SK-N-SH (cell line): ENCODE measurements at regions of chr14 and their contacts with region 1.

Region 1: GRCh38 chr14:55438066-55438683 is 2.2 kb downstream of the TBPL2 start:
- DNase-seq: peak; percentile 62
- H3K4me3 ChIP-seq: no peak overlapping the region
- H3K27ac ChIP-seq: no peak overlapping the region
- H3K4me1 ChIP-seq: no peaks in the 10 kb centered on the region
- H3K27me3 ChIP-seq: peaks cover 15% of the 10 kb centered on the region; the same call in 1 of the 2 replicates
- CTCF ChIP-seq: peak; percentile 73
- EP300 ChIP-seq: no peak
- RAD21 ChIP-seq: peak; percentile 86

Region 2: DNA sequence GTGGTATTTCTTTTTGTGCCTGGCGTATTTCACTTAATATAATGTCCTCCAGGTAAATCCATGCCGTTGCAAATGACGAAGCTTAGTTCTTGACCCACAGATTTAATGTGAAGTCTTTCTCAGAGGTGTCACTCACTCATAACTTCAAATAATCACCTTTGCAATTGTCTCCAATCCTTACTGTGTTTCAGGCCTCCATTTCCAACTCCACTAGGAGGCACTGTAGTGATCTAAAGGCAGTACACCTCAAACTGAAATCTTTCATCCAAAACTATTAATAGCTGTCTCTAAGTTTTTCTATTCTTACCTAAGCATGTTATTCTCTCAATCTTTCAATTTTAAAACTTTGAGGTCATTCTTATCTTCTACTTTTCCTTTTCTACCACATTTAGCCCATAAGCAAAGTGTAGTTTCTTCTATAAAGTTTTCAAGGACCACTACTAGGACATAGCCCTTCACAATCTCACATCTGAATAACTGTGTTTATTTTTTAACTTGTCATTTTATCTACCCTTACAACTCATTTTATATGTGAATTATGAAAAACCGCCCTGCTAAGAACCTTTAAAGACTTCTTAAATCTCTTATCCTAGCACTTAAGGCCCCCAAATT is 192.4 kb before region 1 on chr14:
- CTCF ChIA-PET with region 1: no interaction called
- POLR2A ChIA-PET with region 1: no interaction called
- DNase-seq: no peak
- H3K4me3 ChIP-seq: no peak overlapping the region
- H3K27ac ChIP-seq: no peak overlapping the region
- H3K4me1 ChIP-seq: no peaks in the 10 kb centered on the region; a peak in 1 of 4 replicates
- H3K27me3 ChIP-seq: peaks cover 7% of the 10 kb centered on the region
- CTCF ChIP-seq: peak; percentile 72
- EP300 ChIP-seq: no peak
- RAD21 ChIP-seq: peak; percentile 50

Region 3: GRCh38 chr14:55454264-55455002 is 16.3 kb after region 1 on chr14:
- CTCF ChIA-PET with region 1: interaction called, 11 read pairs
- POLR2A ChIA-PET with region 1: no interaction called
- DNase-seq: peak; percentile 79
- H3K4me3 ChIP-seq: peak overlapping the region; percentile 16 to 21; a peak in 2 of 4 replicates
- H3K27ac ChIP-seq: peak overlapping the region; percentile 58 to 92
- H3K4me1 ChIP-seq: peaks cover 17 to 23% of the 10 kb centered on the region in 2 experiments; a peak in 3 of 4 replicates
- H3K27me3 ChIP-seq: no peaks in the 10 kb centered on the region
- CTCF ChIP-seq: no peak
- EP300 ChIP-seq: peak; percentile 25 to 83; a peak in 3 of 4 replicates
- RAD21 ChIP-seq: no peak

Region 4: GRCh38 chr14:55562135-55562534 is 124.0 kb after region 1 on chr14:
- CTCF ChIA-PET with region 1: no interaction called
- POLR2A ChIA-PET with region 1: no interaction called
- DNase-seq: no peak
- H3K4me3 ChIP-seq: no peak overlapping the region
- H3K27ac ChIP-seq: no peak overlapping the region
- H3K4me1 ChIP-seq: peaks cover 0 to 4% of the 10 kb centered on the region in 2 experiments; a peak in 1 of 4 replicates
- H3K27me3 ChIP-seq: no peaks in the 10 kb centered on the region
- CTCF ChIP-seq: no peak
- EP300 ChIP-seq: no peak
- RAD21 ChIP-seq: no peak

Region 5: DNA sequence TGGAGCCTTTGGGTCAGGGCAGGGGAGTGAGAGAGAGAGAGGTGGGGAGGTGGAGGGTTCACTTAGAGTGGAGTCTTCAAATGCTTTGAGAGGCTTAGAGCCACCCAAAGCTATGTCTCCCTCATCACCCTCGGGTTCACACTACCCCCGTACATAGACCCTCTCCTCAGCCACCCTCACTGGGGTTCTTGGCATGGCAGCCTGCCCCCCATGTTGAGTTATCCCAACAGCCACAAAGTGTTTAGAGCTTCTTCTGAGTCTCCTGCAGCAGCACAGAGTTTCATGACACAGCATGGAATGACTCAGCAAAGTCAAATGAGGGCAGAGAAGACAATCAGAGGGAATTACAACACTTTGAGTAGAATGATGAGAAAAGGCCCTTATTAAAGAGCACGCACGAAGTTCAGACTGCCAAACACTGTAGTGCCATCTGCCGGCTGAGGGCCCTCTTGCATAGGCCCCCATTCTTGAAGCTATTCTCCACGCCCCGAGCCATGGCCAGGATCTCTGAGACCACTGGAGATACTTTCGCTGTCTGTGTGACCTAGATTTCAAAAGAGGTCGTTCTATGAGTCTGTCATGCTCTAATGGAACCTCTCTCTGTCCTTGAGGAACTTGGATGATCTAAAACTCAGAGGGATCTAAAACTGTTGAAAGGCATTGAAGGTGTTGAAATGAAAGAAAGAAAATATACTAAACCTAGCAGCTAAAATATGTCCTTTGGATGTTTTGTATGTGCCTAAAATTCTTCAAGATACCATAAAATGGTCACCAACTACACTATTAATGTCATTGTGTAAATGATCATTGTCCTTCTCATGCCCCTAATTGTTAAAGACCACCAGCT is 901.9 kb after region 1 on chr14:
- CTCF ChIA-PET with region 1: interaction called, 13 read pairs
- POLR2A ChIA-PET with region 1: no interaction called
- DNase-seq: peak; percentile 39
- H3K4me3 ChIP-seq: no peak overlapping the region
- H3K27ac ChIP-seq: no peak overlapping the region
- H3K4me1 ChIP-seq: 0 out of 4 replicates have a peak, but pooled peaks cover 0 to 5% of the 10 kb centered on the region in 2 experiments
- H3K27me3 ChIP-seq: peaks cover 10% of the 10 kb centered on the region
- CTCF ChIP-seq: peak; percentile 96
- EP300 ChIP-seq: no peak
- RAD21 ChIP-seq: peak; percentile 71

Region 6: GRCh38 chr14:56474419-56475022 is 1036.3 kb after region 1 on chr14:
- CTCF ChIA-PET with region 1: interaction called, 27 read pairs
- POLR2A ChIA-PET with region 1: no interaction called
- DNase-seq: peak; percentile 43
- H3K4me3 ChIP-seq: no peak overlapping the region; a peak in 1 of 4 replicates
- H3K27ac ChIP-seq: no peak overlapping the region
- H3K4me1 ChIP-seq: no peaks in the 10 kb centered on the region
- H3K27me3 ChIP-seq: no peaks in the 10 kb centered on the region; the same call in 1 of the 2 replicates
- CTCF ChIP-seq: peak; percentile 85
- EP300 ChIP-seq: no peak
- RAD21 ChIP-seq: peak; percentile 87